ENCODE measurements at regions of chr16 and their contacts with region 1.

Region 1: DNA sequence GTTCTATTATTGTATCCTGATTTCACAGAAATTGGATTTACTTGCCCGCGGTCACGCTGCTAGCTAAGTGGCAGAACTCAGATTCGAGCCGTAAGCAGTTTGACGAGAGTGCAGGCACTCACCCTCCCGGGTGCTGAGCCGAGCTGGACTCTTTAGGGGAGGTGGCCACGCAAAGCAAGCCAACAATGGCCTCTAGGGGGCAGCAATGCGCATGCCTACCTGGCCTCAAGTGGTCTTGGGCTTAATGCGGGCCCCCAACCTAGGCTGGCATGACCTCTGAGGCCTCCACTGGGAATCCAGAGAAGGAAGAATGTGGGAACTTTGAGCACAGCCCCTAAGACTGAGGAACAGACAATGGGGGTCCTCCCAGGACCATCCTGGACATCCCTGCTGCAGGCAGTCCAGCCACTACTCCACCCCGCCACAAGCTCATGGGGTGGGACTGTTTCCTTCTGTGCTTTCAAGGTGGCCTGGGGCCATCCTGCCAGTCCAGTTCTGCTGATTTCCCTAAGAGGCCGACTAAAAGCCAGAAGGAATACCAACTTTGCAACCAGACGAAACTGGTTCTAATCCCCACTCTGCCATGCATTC is 276.5 kb downstream of the XYLT1 start:
- DNase-seq: no peak
- H3K4me3 ChIP-seq: no peak overlapping the region
- H3K27ac ChIP-seq: no peak overlapping the region
- H3K4me1 ChIP-seq: no peaks in the 10 kb centered on the region
- H3K27me3 ChIP-seq: no peaks in the 10 kb centered on the region
- CTCF ChIP-seq: peak; percentile 26 to 42 (median 37)
- POLR2A ChIP-seq: no peak

Region 2: GRCh38 chr16:17271687-17272086 is 77.4 kb after region 1 on chr16:
- intact Hi-C with region 1: loop called (anchors 2 kb)
- DNase-seq: no peak
- H3K4me3 ChIP-seq: no peak overlapping the region
- H3K27ac ChIP-seq: no peak overlapping the region
- H3K4me1 ChIP-seq: no peaks in the 10 kb centered on the region
- H3K27me3 ChIP-seq: no peaks in the 10 kb centered on the region
- CTCF ChIP-seq: no peak
- POLR2A ChIP-seq: no peak

Region 3: DNA sequence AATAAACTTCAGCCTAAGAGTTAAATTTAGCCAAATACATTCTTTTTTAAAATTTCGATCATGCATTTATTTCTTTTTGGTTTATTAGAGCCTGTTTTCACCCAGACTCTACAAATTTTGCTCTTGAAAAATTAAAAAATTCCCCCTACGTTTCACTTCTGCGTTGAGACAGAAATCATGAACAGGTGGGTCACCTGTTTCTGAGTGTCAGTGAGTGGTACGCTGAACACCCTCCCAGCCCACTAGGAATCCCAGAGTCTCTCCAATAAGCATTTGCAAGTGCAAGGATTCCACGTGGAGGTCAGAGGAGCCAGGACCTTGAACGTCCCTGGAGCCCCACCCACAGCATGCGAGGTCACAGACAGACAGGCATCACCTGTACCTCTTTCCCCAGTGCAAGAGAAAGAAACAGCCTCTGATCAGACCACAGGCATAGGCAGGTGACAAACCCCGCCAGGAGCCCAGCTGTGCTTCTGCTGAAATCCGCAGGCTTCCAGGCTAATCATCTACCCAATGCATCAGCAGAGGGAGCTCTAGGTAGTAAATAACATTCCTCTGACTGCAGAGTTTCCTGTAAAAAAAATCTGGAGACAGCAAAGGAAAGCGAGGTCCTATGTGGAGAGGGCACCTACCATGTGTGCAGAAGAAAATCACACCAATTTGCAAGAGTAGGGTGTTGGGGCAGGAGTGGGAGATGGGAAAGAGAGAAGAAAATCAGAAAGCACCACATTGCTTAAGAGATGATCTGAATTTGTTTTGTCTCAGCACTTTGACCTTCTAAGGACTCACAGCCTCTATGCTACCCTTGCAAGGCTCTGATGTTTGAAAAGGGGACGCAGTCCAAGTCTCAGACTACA is 282.4 kb after region 1 on chr16:
- intact Hi-C with region 1: loop called (anchors 10 kb)
- DNase-seq: no peak
- H3K4me3 ChIP-seq: no peak overlapping the region
- H3K27ac ChIP-seq: no peak overlapping the region
- H3K4me1 ChIP-seq: no peaks in the 10 kb centered on the region
- H3K27me3 ChIP-seq: peaks cover 0 to 7% of the 10 kb centered on the region in 2 donors
- CTCF ChIP-seq: peak in 2 of 3 donors; percentile 45 to 50
- POLR2A ChIP-seq: no peak